MCF 10A (cell line): ENCODE measurements at regions of chr1 and their contacts with region 1.

Region 1: GRCh38 chr1:48061162-48062136 is 64.3 kb upstream of the TRABD2B start:
- DNase-seq: peak; percentile 78
- H3K4me3 Mint-ChIP-seq: no peak overlapping the region
- H3K27ac Mint-ChIP-seq: no peak overlapping the region
- H3K4me1 Mint-ChIP-seq: no peaks in the 10 kb centered on the region
- H3K27me3 Mint-ChIP-seq: no peaks in the 10 kb centered on the region
- CTCF ChIP-seq: peak; percentile 82

Region 2: GRCh38 chr1:47745725-47746597 is 315.5 kb before region 1 on chr1:
- CTCF ChIA-PET with region 1: interaction called, 16 read pairs
- POLR2A ChIA-PET with region 1: no interaction called
- intact Hi-C with region 1: no loop called
- DNase-seq: no peak
- H3K4me3 Mint-ChIP-seq: no peak overlapping the region
- H3K27ac Mint-ChIP-seq: no peak overlapping the region
- H3K4me1 Mint-ChIP-seq: no peaks in the 10 kb centered on the region
- H3K27me3 Mint-ChIP-seq: peaks cover 13% of the 10 kb centered on the region
- CTCF ChIP-seq: no peak

Region 3: DNA sequence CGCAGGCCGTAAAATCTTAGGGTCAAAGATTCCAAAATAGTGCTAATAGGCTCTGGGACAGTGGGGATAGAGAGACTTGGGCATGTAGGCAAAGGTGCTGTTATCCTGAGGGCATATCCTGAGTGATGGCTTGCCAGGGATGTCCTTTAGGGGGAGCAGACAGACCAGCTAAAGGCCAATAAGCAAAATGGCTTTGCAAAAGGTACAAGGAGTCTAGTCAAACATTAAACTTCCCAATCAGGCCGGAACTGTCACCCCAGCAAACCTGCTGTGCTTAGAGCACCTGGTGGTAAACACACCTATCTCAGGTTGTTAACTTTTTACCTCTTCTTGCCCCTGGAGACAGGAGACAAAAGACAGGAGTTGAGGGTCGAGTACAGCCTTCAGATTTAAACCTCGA is 113.3 kb before region 1 on chr1:
- CTCF ChIA-PET with region 1: interaction called, 6 read pairs
- POLR2A ChIA-PET with region 1: no interaction called
- intact Hi-C with region 1: loop called (anchors 1 kb)
- DNase-seq: peak; percentile 38
- H3K4me3 Mint-ChIP-seq: no peak overlapping the region
- H3K27ac Mint-ChIP-seq: no peak overlapping the region
- H3K4me1 Mint-ChIP-seq: peaks cover 6% of the 10 kb centered on the region
- H3K27me3 Mint-ChIP-seq: no peaks in the 10 kb centered on the region
- CTCF ChIP-seq: peak; percentile 12

Region 4: GRCh38 chr1:48019714-48020315 is 41.6 kb before region 1 on chr1:
- CTCF ChIA-PET with region 1: interaction called, 32 read pairs
- POLR2A ChIA-PET with region 1: interaction called, 9 read pairs
- intact Hi-C with region 1: no loop called
- DNase-seq: peak; percentile 98
- H3K4me3 Mint-ChIP-seq: no peak overlapping the region
- H3K27ac Mint-ChIP-seq: peak overlapping the region; percentile 95
- H3K4me1 Mint-ChIP-seq: peaks cover 40% of the 10 kb centered on the region
- H3K27me3 Mint-ChIP-seq: no peaks in the 10 kb centered on the region
- CTCF ChIP-seq: no peak

Region 5: GRCh38 chr1:48040154-48040553 is 21.3 kb before region 1 on chr1:
- CTCF ChIA-PET with region 1: interaction called, 17 read pairs
- POLR2A ChIA-PET with region 1: interaction called, 3 read pairs
- intact Hi-C with region 1: no loop called
- DNase-seq: no peak
- H3K4me3 Mint-ChIP-seq: no peak overlapping the region
- H3K27ac Mint-ChIP-seq: no peak overlapping the region
- H3K4me1 Mint-ChIP-seq: peaks cover 10% of the 10 kb centered on the region
- H3K27me3 Mint-ChIP-seq: no peaks in the 10 kb centered on the region
- CTCF ChIP-seq: no peak

Region 6: GRCh38 chr1:48077795-48078222 is 16.4 kb after region 1 on chr1:
- CTCF ChIA-PET with region 1: interaction called, 13 read pairs
- POLR2A ChIA-PET with region 1: interaction called, 3 read pairs
- intact Hi-C with region 1: no loop called
- DNase-seq: no peak
- H3K4me3 Mint-ChIP-seq: no peak overlapping the region
- H3K27ac Mint-ChIP-seq: no peak overlapping the region
- H3K4me1 Mint-ChIP-seq: no peaks in the 10 kb centered on the region
- H3K27me3 Mint-ChIP-seq: no peaks in the 10 kb centered on the region
- CTCF ChIP-seq: no peak

Region 7: GRCh38 chr1:48164571-48164970 is 103.1 kb after region 1 on chr1:
- CTCF ChIA-PET with region 1: no interaction called
- POLR2A ChIA-PET with region 1: no interaction called
- intact Hi-C with region 1: no loop called
- DNase-seq: no peak
- H3K4me3 Mint-ChIP-seq: no peak overlapping the region
- H3K27ac Mint-ChIP-seq: no peak overlapping the region
- H3K4me1 Mint-ChIP-seq: no peaks in the 10 kb centered on the region
- H3K27me3 Mint-ChIP-seq: no peaks in the 10 kb centered on the region
- CTCF ChIP-seq: no peak